ENCODE measurements at regions of chr2 and their contacts with region 1.

Region 1: GRCh38 chr2:168006498-168006897 is 240.9 kb downstream of the STK39 start:
- DNase-seq: no peak
- H3K4me3 ChIP-seq: no peak overlapping the region
- CTCF ChIP-seq: no peak

Region 2: DNA sequence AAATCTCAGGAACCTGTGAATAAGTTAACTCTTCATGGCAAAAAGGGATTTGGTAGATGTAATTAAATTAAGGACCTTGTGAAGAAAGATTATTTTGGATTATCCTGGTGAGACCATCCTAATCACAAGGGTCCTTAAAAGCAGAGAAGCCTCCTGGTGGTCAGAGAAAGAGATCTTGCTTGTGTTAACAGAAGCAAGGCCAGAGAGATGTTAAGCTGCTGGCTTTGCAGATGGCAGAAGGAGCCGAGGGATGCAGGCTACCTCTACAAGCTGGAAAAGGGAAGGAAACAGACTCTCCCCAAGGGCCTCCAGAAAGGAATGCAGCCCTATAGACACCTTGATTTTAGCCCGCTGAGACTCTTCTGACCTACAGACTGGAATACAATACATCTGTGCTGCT is 43.9 kb after region 1 on chr2:
- in situ Hi-C with region 1: loop called (anchors 5 kb)
- DNase-seq: no peak
- H3K4me3 ChIP-seq: no peak overlapping the region
- CTCF ChIP-seq: no peak

Region 3: DNA sequence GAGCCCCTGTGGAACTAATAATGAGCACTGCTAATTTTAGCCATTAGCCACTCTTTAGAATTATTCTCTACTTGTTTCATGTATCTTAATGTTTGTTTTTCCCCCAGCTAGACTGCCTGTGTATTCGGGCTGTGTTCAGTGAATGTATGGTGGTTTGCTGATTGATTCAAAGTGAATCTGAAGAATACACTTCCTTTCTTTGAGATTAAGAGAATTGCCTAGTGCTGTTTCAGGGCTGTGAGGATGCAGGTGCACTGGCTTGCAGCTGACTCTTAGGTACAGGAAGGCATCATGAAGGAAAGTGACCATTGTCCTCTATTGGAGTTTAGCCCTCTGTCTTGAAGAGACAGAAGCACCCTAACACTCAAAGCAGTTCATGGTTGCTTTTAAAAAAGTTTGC is 588.3 kb after region 1 on chr2:
- in situ Hi-C with region 1: no loop called
- DNase-seq: no peak
- H3K4me3 ChIP-seq: no peak overlapping the region
- CTCF ChIP-seq: no peak